CD8-positive, alpha-beta T cell (primary cell): ENCODE measurements at regions of chr1 and their contacts with region 1.

Region 1: DNA sequence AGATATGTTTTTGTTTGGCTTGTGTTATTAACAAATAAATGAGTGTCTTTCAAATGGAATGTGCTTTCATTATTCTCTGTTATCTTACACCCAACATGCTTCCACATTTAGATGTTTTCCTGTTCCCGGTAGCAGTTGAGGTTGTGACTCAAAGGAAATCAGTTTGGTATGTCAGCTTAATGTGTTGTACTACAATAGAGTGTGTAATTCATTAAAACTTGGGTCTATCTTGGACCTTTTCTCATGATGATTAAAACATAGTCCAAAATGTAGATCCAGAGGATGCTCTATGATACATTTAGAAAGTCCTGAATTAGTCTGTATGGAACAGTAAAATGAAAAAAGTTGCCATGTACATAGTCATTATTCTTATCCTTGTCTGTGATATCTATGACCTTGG is 26.7 kb downstream of the RTCA start:
- DNase-seq: no peak
- ATAC-seq: no peak
- H3K4me3 ChIP-seq: no peak overlapping the region
- H3K4me3 Mint-ChIP-seq: no peak overlapping the region
- H3K27ac ChIP-seq: no peak overlapping the region
- H3K27ac Mint-ChIP-seq: peak overlapping the region; percentile 3
- H3K4me1 ChIP-seq: no peaks in the 10 kb centered on the region
- H3K4me1 Mint-ChIP-seq: no peaks in the 10 kb centered on the region
- H3K27me3 ChIP-seq: no peaks in the 10 kb centered on the region
- H3K27me3 Mint-ChIP-seq: no peaks in the 10 kb centered on the region
- CTCF ChIP-seq: no peak

Region 2: DNA sequence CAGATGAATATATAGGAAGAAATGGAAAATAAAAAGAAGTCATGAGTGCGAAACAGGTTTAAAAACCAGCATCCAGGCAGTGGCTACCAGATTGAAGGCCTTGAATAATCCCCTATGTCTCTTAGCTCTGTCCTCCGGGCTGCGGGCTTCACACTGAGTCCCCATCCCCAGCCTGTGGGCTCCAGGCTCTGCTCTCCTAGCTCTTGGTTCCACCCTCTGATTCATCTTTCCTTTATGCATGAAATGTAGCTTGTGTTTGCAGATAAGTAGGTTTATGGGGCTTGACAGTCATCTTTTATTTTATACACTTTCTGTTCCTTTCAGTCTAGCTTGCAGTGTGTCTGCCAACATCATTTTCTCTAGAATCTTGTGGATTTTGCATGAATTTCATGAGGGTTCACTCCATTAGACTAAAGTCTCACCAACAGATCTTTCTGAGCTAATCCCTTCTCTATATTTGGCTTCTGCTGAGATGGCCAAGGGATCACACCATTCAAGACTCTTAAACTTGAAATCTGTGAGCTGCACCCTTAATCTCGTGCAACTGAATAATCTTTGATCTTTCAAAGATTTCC is 854.0 kb before region 1 on chr1:
- CTCF ChIA-PET with region 1: no interaction called
- POLR2A ChIA-PET with region 1: no interaction called
- intact Hi-C with region 1: no loop called
- DNase-seq: no peak
- ATAC-seq: no peak
- H3K4me3 ChIP-seq: no peak overlapping the region
- H3K4me3 Mint-ChIP-seq: no peak overlapping the region
- H3K27ac ChIP-seq: no peak overlapping the region
- H3K27ac Mint-ChIP-seq: no peak overlapping the region
- H3K4me1 ChIP-seq: no peaks in the 10 kb centered on the region
- H3K4me1 Mint-ChIP-seq: no peaks in the 10 kb centered on the region
- H3K27me3 ChIP-seq: no peaks in the 10 kb centered on the region
- H3K27me3 Mint-ChIP-seq: peaks cover under 1% of the 10 kb centered on the region
- CTCF ChIP-seq: no peak

Region 3: GRCh38 chr1:100343897-100344296 is 51.2 kb after region 1 on chr1:
- CTCF ChIA-PET with region 1: no interaction called
- POLR2A ChIA-PET with region 1: no interaction called
- intact Hi-C with region 1: loop called in 1 of 2 experiments (anchors 5 kb)
- DNase-seq: no peak
- ATAC-seq: no peak
- H3K4me3 ChIP-seq: no peak overlapping the region
- H3K4me3 Mint-ChIP-seq: no peak overlapping the region
- H3K27ac ChIP-seq: no peak overlapping the region
- H3K27ac Mint-ChIP-seq: no peak overlapping the region
- H3K4me1 ChIP-seq: no peaks in the 10 kb centered on the region
- H3K4me1 Mint-ChIP-seq: no peaks in the 10 kb centered on the region
- H3K27me3 ChIP-seq: no peaks in the 10 kb centered on the region
- H3K27me3 Mint-ChIP-seq: no peaks in the 10 kb centered on the region
- CTCF ChIP-seq: no peak

Region 4: DNA sequence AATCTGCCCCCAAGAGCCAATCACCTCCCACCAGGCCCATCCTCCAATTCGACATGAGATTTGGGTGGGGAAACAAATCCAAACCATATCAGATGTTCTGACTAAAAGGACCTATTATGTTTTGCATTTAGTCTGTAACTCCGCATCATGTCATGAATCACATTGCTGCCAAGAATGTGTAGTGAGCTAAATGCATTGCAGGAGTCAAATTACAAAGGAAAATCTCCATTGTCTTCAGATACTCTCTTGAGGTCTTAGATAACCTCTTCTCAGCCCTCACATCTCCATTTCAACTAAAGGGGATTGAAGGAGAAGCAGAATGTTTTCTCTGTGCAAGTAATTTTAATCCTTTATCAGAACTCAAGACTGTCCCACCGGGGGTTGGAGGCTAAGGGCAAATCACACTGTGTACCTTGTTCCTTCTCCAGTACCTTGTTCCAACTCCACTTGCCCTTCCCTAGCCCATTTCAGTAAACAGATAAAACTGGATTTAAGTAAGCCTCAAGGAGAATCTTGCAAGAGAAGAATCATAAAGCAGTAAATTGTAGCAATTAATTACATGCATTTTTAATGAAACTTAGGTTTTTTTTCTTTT is 567.8 kb after region 1 on chr1:
- CTCF ChIA-PET with region 1: no interaction called
- POLR2A ChIA-PET with region 1: no interaction called
- intact Hi-C with region 1: loop called in 1 of 2 experiments (anchors 5 kb)
- DNase-seq: no peak
- ATAC-seq: no peak
- H3K4me3 ChIP-seq: no peak overlapping the region
- H3K4me3 Mint-ChIP-seq: no peak overlapping the region
- H3K27ac ChIP-seq: no peak overlapping the region
- H3K27ac Mint-ChIP-seq: no peak overlapping the region
- H3K4me1 ChIP-seq: no peaks in the 10 kb centered on the region
- H3K4me1 Mint-ChIP-seq: no peaks in the 10 kb centered on the region
- H3K27me3 ChIP-seq: peaks cover 0 to 3% of the 10 kb centered on the region in 2 experiments
- H3K27me3 Mint-ChIP-seq: no peaks in the 10 kb centered on the region
- CTCF ChIP-seq: no peak